K562 (cell line): ENCODE measurements at regions of chr13 and their contacts with region 1.

Region 1: DNA sequence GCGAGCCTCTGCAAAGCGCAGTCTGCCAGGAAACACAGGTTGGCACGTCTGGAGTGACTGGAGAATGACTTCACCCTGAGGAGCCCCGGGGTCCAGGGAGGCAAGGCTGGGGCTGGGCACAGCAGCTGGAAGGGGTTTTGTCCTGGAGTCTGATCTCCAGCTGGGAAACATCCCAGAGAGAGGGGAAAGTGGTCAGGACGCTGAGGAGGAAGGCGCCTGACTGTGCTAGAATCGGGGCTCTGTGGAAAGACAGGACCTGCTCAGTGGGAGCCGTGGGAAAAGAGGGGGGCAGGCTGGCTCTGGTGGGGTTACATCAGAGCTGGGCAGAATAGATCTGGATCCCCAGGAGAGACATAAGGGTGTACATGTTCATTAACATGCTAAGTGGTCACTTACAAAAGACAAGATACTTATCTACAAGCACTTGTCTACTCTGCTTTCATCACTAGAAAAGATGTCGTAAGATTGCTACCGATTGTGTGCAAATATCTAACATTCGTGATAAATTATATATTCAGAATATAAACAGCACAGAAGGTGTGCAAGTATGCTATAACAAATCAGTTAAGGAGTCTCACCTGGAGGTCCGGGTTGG is 106.6 kb downstream of the COL4A1 start:
- DNase-seq: no peak
- ATAC-seq: no peak
- H3K4me3 ChIP-seq: no peak overlapping the region
- H3K27ac ChIP-seq: no peak overlapping the region
- H3K4me1 ChIP-seq: no peaks in the 10 kb centered on the region
- H3K27me3 ChIP-seq: peaks cover 2 to 21% of the 10 kb centered on the region in 2 experiments; a peak in 2 of 5 replicates
- CTCF ChIP-seq: no peak
- EP300 ChIP-seq: no peak
- POLR2A ChIP-seq: no peak
- RAD21 ChIP-seq: no peak

Region 2: DNA sequence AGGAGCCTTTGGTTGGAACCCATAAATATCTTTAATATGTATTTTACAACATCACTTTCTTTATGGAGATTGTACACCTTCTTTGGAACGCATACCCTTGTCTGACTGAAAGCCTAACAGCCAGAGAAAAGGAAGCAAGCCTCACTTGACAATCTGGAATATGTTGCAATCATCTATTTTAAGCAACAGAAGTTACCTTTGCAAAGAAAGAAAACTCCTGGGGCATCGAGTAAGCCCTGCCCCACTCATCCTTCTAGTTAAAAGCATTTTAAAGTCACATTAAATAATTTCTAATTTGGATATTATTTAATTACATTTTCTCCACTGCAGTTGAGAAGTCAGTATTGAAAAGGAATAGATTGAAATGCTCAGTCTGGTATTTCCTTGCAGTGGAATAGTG is 1028.2 kb before region 1 on chr13:
- CTCF ChIA-PET with region 1: no interaction called
- POLR2A ChIA-PET with region 1: no interaction called
- in situ Hi-C with region 1: no loop called
- intact Hi-C with region 1: no loop called
- DNase-seq: no peak
- ATAC-seq: no peak
- H3K4me3 ChIP-seq: no peak overlapping the region
- H3K27ac ChIP-seq: no peak overlapping the region
- H3K4me1 ChIP-seq: no peaks in the 10 kb centered on the region; a peak in 1 of 5 replicates
- H3K27me3 ChIP-seq: no peaks in the 10 kb centered on the region
- CTCF ChIP-seq: no peak
- EP300 ChIP-seq: no peak
- POLR2A ChIP-seq: no peak
- RAD21 ChIP-seq: no peak

Region 3: DNA sequence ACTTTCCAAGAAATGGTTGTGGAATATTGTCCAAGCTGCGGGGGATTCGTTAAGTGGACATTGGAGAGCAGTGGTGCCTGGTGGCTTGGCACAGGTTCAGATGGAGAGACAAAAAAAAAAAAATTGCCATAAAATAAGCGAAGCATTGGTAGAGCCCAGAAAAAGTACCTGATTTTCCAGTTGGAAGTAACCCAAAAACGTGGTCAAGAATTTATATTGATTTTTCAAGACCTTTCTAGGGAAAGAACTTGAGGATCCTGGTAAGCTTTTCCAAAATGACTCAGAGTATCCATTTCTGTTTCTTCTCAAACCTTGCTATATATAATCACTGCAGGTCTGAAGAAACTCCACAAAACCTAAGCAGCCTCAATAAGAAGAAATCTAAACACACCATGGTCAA is 607.8 kb after region 1 on chr13:
- CTCF ChIA-PET with region 1: no interaction called
- POLR2A ChIA-PET with region 1: no interaction called
- in situ Hi-C with region 1: no loop called
- intact Hi-C with region 1: loop called (anchors 5 kb)
- DNase-seq: no peak
- ATAC-seq: no peak
- H3K4me3 ChIP-seq: no peak overlapping the region
- H3K27ac ChIP-seq: no peak overlapping the region
- H3K4me1 ChIP-seq: peaks cover 0 to 10% of the 10 kb centered on the region in 2 experiments; a peak in 1 of 5 replicates
- H3K27me3 ChIP-seq: peaks cover 14 to 30% of the 10 kb centered on the region in 2 experiments; a peak in 4 of 5 replicates
- CTCF ChIP-seq: no peak
- EP300 ChIP-seq: no peak
- POLR2A ChIP-seq: no peak
- RAD21 ChIP-seq: no peak

Region 4: DNA sequence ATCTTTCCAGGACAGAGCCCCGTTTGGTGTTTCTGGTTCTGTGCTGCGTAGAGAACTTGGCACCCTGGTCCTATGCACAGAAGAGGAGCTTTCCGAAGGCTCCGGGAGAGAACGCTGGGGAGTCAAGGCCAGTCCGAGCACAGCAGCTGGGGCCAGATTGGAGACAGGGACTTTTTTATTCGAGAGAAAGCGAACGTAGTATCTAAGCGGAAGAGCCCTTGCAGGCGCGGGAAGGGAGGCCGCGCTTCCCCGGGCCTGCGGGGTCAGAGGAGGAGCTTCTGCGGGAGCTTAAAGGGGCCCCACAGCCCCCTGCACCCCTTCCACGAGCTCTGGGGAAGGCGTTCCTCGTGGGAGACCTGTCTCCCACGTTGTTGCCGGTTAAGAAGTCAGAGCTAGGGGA is 866.2 kb after region 1 on chr13:
- CTCF ChIA-PET with region 1: no interaction called
- POLR2A ChIA-PET with region 1: no interaction called
- in situ Hi-C with region 1: no loop called
- intact Hi-C with region 1: no loop called
- DNase-seq: no peak
- ATAC-seq: no peak
- H3K4me3 ChIP-seq: no peak overlapping the region
- H3K27ac ChIP-seq: no peak overlapping the region
- H3K4me1 ChIP-seq: peaks cover 0 to 6% of the 10 kb centered on the region in 2 experiments; a peak in 2 of 5 replicates
- H3K27me3 ChIP-seq: no peaks in the 10 kb centered on the region; a peak in 3 of 5 replicates
- CTCF ChIP-seq: no peak
- EP300 ChIP-seq: no peak
- POLR2A ChIP-seq: no peak
- RAD21 ChIP-seq: no peak